Heart right ventricle (tissue), 16 donors: ENCODE measurements at regions of chr9 and their contacts with region 1.

Region 1: GRCh38 chr9:14353222-14354056 is 39.5 kb upstream of the NFIB start:
- DNase-seq: peak; percentile 96 to 97
- ATAC-seq: peak; percentile 58 to 82 (median 76)
- H3K4me3 ChIP-seq: peak overlapping the region in 5 of 10 donors; percentile 25 to 44 (median 31)
- H3K27ac ChIP-seq: peak overlapping the region in 9 of 10 donors; percentile 26 to 98 (median 92)
- H3K4me1 ChIP-seq: peaks cover 0 to 75% (median 49%) of the 10 kb centered on the region in 9 donors
- H3K27me3 ChIP-seq: peaks cover 0 to 31% (median 0%) of the 10 kb centered on the region in 7 donors
- CTCF ChIP-seq: peak; percentile 90 to 97 (median 91)

Region 2: DNA sequence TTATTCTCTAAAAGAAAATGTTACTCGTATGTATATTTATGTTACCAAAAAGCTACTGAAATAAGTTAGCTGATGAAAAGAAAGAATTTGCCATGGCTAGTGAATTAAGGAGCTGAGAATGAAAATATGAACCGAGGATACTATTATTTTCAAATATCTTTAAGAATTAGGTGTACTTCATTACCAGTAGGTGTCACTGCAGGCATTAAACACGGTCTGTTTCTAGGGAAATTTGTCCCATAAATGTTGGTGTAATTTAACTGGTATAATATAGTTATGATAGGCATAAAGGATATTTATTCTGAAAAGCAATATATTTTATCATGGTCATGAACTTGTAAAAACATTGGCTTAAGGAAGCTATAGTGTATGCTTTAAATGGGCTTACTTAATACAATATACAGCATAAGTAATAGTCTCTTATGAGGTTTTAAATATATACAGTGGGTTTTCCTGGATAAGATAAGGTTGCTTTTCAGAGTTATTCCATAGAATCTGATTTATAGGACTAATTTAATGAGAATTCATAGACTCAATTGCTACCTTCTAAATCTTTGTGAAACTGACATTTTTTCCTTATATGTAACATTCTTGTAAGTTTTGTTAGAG is 1001.6 kb before region 1 on chr9:
- intact Hi-C with region 1: loop called in 3 of 10 experiments (anchors 5 to 10 kb)
- DNase-seq: peak in 1 of 2 donors; percentile 40
- ATAC-seq: peak in 2 of 8 donors; percentile 31 to 55
- H3K4me3 ChIP-seq: no peak overlapping the region
- H3K27ac ChIP-seq: no peak overlapping the region
- H3K4me1 ChIP-seq: no peaks in the 10 kb centered on the region
- H3K27me3 ChIP-seq: no peaks in the 10 kb centered on the region
- CTCF ChIP-seq: peak; percentile 54 to 84 (median 68)

Region 3: DNA sequence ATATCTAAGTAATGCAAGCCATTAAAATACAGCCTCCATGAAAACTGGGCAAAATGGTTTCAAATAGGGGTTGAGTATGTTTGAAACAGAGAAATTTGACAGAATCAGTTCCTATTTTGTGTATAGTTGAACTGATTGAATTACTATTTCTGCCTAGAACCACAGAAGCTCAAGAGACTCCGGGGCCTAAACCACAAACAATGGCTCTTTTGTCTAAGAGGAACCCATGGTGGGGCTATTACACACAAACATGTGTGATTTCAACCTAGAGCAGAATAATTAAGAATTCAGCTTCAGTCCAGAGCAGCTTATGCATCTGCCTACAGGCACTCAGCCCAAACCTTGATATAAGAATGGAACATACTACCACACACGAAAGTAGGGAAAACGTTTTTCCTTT is 902.7 kb before region 1 on chr9:
- intact Hi-C with region 1: loop called in 1 of 10 experiments (anchors 5 kb)
- DNase-seq: no peak
- ATAC-seq: no peak
- H3K4me3 ChIP-seq: no peak overlapping the region
- H3K27ac ChIP-seq: no peak overlapping the region
- H3K4me1 ChIP-seq: peaks cover 0 to 43% (median 27%) of the 10 kb centered on the region in 9 donors
- H3K27me3 ChIP-seq: no peaks in the 10 kb centered on the region
- CTCF ChIP-seq: no peak

Region 4: DNA sequence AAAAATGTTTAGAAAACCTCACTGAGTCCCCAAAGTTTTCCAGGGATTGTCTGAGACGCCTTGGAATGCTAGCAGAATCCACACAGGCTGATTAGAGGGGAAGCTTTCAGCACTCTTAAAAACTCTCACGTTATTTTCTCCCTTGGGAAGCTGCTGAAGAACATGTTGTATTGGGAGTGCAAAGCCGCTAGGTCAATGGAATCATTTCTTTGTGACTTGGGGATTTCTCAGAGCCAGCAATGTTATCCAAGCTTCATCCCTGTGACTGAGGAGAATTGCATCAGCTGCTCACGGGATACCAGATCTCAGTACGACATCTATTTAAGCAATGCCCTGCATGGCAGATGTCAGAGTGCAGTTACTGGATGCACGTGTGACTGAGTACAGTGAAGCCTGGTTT is 647.5 kb before region 1 on chr9:
- intact Hi-C with region 1: loop called in 1 of 10 experiments (anchors 5 kb)
- DNase-seq: peak in 1 of 2 donors; percentile 55
- ATAC-seq: peak; percentile 85 to 96 (median 91)
- H3K4me3 ChIP-seq: no peak overlapping the region
- H3K27ac ChIP-seq: peak overlapping the region in 8 of 10 donors; percentile 13 to 65 (median 50)
- H3K4me1 ChIP-seq: peaks cover 0 to 29% (median 18%) of the 10 kb centered on the region in 9 donors
- H3K27me3 ChIP-seq: no peaks in the 10 kb centered on the region
- CTCF ChIP-seq: no peak

Region 5: GRCh38 chr9:14096258-14096922 is 257.0 kb before region 1 on chr9:
- intact Hi-C with region 1: loop called in 2 of 10 experiments (anchors 5 to 10 kb)
- DNase-seq: peak in 1 of 2 donors; percentile 63
- ATAC-seq: peak; percentile 56 to 93 (median 82)
- H3K4me3 ChIP-seq: peak overlapping the region in 8 of 10 donors; percentile 3 to 43 (median 29)
- H3K27ac ChIP-seq: peak overlapping the region; percentile 50 to 93 (median 81)
- H3K4me1 ChIP-seq: peaks cover 3 to 85% (median 55%) of the 10 kb centered on the region in 9 donors
- H3K27me3 ChIP-seq: no peaks in the 10 kb centered on the region
- CTCF ChIP-seq: no peak

Region 6: DNA sequence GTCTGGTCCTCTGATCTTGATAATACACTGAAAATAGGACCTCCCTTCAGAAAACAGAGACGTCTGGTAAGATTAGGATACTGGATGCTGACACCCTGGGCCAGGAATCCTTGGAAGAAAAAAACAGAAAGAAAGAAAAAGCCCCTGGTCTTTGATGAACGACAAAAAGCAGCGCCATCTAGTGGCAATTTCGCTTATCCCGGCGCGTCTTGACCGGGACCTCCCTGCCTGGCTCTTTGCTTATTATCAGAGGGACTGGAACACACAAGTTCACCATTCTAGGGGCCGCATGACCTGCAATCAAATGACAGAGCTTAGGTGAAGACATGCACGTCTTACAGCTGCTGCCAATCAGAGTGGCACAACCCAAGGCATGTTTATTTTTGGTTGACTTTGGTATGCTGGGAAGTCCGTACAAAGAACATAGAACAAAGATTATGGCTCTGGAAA is 75.4 kb after region 1 on chr9:
- intact Hi-C with region 1: loop called in 2 of 10 experiments (anchors 5 kb)
- DNase-seq: peak; percentile 64 to 81
- ATAC-seq: peak; percentile 65 to 87 (median 76)
- H3K4me3 ChIP-seq: no peak overlapping the region
- H3K27ac ChIP-seq: peak overlapping the region in 5 of 10 donors; percentile 10 to 65 (median 29)
- H3K4me1 ChIP-seq: peaks cover 6 to 30% (median 14%) of the 10 kb centered on the region in 9 donors
- H3K27me3 ChIP-seq: no peaks in the 10 kb centered on the region
- CTCF ChIP-seq: peak; percentile 67 to 87 (median 82)